ENCODE measurements at regions of chr5 and their contacts with region 1.

Region 1: DNA sequence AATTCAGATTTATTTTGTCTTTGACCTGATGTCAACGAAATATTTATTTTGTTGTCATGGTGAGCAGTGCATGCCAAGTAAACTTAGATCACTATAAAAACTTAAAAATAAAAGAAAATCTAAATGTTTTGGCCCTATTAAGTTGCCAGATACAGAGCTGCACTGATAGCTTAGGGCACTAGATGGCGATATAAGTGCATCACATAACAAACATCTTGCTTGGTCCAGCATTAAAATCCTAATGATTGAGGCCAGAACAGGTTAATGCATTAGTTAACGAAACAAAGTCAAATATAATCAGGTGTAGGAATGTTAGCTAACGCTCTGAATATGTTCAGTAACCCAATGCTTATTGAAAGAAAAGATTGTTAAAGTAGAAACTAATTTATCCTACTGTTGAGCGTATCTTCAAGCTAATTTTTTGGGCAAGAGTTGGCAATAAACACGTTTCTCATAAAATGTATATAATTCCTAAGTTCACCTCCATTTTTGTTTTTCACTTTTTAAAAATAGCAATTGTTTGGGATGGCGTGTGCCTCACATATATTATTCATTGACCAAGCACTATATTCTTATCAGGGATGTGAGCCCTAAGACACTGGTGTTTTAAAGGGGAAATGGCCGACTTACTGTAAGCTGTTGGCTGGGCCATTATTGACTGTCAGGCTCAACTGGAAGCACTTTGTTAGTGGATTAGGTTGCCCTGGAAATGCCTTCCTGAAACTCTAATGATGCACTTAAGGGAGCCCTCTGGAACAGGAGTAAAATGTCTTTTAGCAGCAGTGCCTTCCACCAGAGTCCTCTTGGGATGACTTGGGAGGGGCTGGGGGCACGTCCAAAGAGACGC is 33.3 kb downstream of the KCTD16 start:
- DNase-seq: no peak
- H3K4me3 ChIP-seq: no peak overlapping the region
- CTCF ChIP-seq: peak; percentile 63

Region 2: DNA sequence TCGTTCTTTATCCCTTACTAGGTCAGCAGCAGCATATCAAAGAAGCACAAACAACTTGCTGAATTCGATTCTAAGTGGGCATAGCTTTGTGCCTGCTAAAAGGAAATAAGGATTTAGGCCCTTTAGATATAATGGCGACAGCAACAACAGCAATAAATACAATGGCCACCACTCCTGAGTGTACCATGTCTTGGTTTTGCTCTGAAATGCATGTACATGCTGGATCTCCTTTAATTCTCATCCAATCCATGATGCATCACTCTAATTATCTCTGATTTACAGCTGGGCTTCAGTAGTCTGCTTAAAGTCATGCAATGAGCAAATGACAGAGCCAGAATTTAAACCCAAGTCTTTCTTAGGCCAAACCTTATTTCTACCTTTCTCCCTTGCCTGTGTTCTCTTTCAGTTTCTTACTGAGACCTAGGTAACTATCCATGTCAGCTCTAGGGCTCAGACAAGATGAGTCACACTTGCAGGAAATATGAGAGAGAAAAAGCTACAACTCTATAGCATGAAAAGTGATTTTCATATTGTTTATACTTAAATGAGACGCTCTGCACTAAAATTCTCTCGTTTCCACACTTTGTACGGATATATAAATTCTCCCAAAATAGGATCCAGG is 280.2 kb before region 1 on chr5:
- CTCF ChIA-PET with region 1: no interaction called
- POLR2A ChIA-PET with region 1: no interaction called
- DNase-seq: no peak
- H3K4me3 ChIP-seq: no peak overlapping the region
- CTCF ChIP-seq: no peak

Region 3: GRCh38 chr5:144028636-144029035 is 175.3 kb before region 1 on chr5:
- CTCF ChIA-PET with region 1: no interaction called
- POLR2A ChIA-PET with region 1: no interaction called
- DNase-seq: peak; percentile 82
- H3K4me3 ChIP-seq: peak overlapping the region; percentile 34
- CTCF ChIP-seq: no peak

Region 4: DNA sequence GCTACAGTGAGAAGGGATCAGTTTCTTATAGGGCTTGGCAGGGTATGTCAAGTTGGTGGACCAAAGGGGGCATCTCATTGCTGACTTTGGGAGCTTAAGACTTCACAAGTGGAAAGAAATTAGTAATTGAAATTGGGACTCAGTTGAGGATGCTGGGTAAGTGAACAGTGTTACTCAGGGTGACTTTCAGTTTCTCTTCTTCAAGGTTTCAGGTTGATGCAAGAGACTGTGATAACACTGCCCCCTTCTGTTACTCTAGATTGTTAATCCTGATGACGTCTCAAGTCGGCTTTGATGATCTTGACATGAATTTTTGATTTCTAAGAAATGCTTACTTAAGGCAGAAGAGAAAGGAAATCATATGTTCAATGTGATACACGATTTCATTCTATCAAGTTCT is 12.0 kb before region 1 on chr5:
- CTCF ChIA-PET with region 1: interaction called, 39 read pairs
- POLR2A ChIA-PET with region 1: no interaction called
- DNase-seq: no peak
- H3K4me3 ChIP-seq: no peak overlapping the region
- CTCF ChIP-seq: peak; percentile 45

Region 5: GRCh38 chr5:145237843-145238242 is 1033.9 kb after region 1 on chr5:
- CTCF ChIA-PET with region 1: interaction called, 12 read pairs
- POLR2A ChIA-PET with region 1: no interaction called
- DNase-seq: no peak
- H3K4me3 ChIP-seq: no peak overlapping the region
- CTCF ChIP-seq: no peak

Region 6: DNA sequence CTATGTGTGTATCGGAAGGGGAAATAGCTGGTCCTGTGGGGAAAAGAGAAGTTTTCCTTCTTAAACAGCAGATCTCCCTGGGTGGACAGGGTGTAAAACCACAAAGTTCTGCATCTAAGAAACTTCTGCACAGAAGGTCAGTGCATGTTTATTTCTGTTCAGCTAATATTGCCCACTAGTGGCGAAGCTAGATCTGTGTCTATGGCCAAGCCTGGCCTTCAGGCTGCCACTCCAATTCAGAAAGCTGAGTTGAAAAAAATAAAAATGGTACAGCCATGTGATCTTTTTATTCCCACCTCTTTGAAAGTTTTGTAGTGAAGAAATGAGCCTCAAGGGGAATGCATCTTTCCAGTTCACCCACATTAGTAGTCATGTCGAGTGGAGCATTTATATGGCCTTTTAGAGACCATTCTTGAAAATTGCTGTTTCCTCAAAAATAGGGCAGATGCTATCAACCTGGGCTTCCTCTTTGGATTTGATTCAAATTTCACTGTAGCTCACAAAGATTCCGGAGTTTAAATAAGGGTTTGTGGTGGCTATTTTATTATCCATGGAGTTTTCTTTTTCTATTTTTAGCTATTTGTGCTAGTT is 1143.1 kb after region 1 on chr5:
- CTCF ChIA-PET with region 1: interaction called, 11 read pairs
- POLR2A ChIA-PET with region 1: no interaction called
- DNase-seq: no peak
- H3K4me3 ChIP-seq: no peak overlapping the region
- CTCF ChIP-seq: peak; percentile 62

Region 7: GRCh38 chr5:145811834-145812625 is 1608.1 kb after region 1 on chr5:
- CTCF ChIA-PET with region 1: interaction called, 17 read pairs
- POLR2A ChIA-PET with region 1: no interaction called
- DNase-seq: no peak
- H3K4me3 ChIP-seq: no peak overlapping the region
- CTCF ChIP-seq: peak; percentile 25

Region 8: GRCh38 chr5:145825751-145826180 is 1621.8 kb after region 1 on chr5:
- CTCF ChIA-PET with region 1: interaction called, 62 read pairs
- POLR2A ChIA-PET with region 1: no interaction called
- DNase-seq: no peak
- H3K4me3 ChIP-seq: no peak overlapping the region
- CTCF ChIP-seq: peak; percentile 67

Region 9: GRCh38 chr5:146049014-146049703 is 1845.2 kb after region 1 on chr5:
- CTCF ChIA-PET with region 1: interaction called, 13 read pairs
- POLR2A ChIA-PET with region 1: no interaction called
- DNase-seq: peak; percentile 46
- H3K4me3 ChIP-seq: no peak overlapping the region
- CTCF ChIP-seq: peak; percentile 77

Measured in AG04449 (cell line).